ENCODE measurements at regions of chr4 and their contacts with region 1.

Region 1: GRCh38 chr4:10321931-10322330 is 135.3 kb downstream of the ZNF518B start:
- DNase-seq: no peak
- H3K4me3 ChIP-seq: no peak overlapping the region
- H3K4me3 Mint-ChIP-seq: no peak overlapping the region
- H3K27ac Mint-ChIP-seq: peak overlapping the region; percentile 71
- H3K4me1 ChIP-seq: peaks cover 27% of the 10 kb centered on the region
- H3K4me1 Mint-ChIP-seq: peaks cover 16% of the 10 kb centered on the region
- H3K27me3 ChIP-seq: no peaks in the 10 kb centered on the region
- H3K27me3 Mint-ChIP-seq: no peaks in the 10 kb centered on the region
- CTCF ChIP-seq: no peak

Region 2: GRCh38 chr4:10164877-10165283 is 157.1 kb before region 1 on chr4:
- CTCF ChIA-PET with region 1: interaction called, 3 read pairs
- POLR2A ChIA-PET with region 1: no interaction called
- intact Hi-C with region 1: loop called (anchors 1 kb)
- DNase-seq: peak in 1 of 2 experiments; percentile 56
- H3K4me3 ChIP-seq: no peak overlapping the region
- H3K4me3 Mint-ChIP-seq: no peak overlapping the region
- H3K27ac Mint-ChIP-seq: no peak overlapping the region
- H3K4me1 ChIP-seq: peaks cover 18% of the 10 kb centered on the region
- H3K4me1 Mint-ChIP-seq: peaks cover 20% of the 10 kb centered on the region
- H3K27me3 ChIP-seq: no peaks in the 10 kb centered on the region
- H3K27me3 Mint-ChIP-seq: no peaks in the 10 kb centered on the region
- CTCF ChIP-seq: peak; percentile 50 to 63

Region 3: DNA sequence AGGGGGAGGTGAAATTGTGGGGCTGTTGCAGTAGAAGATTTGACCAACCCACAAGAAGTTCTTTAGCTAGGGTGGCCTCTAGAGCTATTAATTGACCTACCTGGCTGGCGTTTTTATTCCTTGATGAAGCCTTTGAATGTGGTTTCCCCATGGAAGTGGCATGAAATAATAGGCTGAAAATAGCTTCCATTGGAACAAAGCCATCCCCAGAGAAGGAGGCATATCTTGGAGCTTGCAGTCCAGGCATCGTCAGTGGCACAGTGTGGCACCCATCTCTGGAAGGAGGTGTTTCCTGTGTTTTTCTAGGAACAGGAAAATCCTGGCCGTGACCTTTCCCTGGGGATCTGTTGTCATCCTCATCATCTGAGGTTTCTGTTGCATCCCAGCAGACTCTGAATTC is 109.0 kb before region 1 on chr4:
- CTCF ChIA-PET with region 1: no interaction called
- POLR2A ChIA-PET with region 1: no interaction called
- intact Hi-C with region 1: loop called (anchors 1 kb)
- DNase-seq: no peak
- H3K4me3 ChIP-seq: no peak overlapping the region
- H3K4me3 Mint-ChIP-seq: peak overlapping the region; percentile 29
- H3K27ac Mint-ChIP-seq: peak overlapping the region; percentile 42
- H3K4me1 ChIP-seq: peaks cover 37% of the 10 kb centered on the region
- H3K4me1 Mint-ChIP-seq: no peaks in the 10 kb centered on the region
- H3K27me3 ChIP-seq: no peaks in the 10 kb centered on the region
- H3K27me3 Mint-ChIP-seq: no peaks in the 10 kb centered on the region
- CTCF ChIP-seq: no peak

Region 4: GRCh38 chr4:10302111-10302510 is 19.8 kb before region 1 on chr4:
- CTCF ChIA-PET with region 1: no interaction called
- POLR2A ChIA-PET with region 1: no interaction called
- intact Hi-C with region 1: loop called (anchors 2 kb)
- DNase-seq: no peak
- H3K4me3 ChIP-seq: no peak overlapping the region
- H3K4me3 Mint-ChIP-seq: no peak overlapping the region
- H3K27ac Mint-ChIP-seq: no peak overlapping the region
- H3K4me1 ChIP-seq: no peaks in the 10 kb centered on the region
- H3K4me1 Mint-ChIP-seq: peaks cover 9% of the 10 kb centered on the region
- H3K27me3 ChIP-seq: no peaks in the 10 kb centered on the region
- H3K27me3 Mint-ChIP-seq: no peaks in the 10 kb centered on the region
- CTCF ChIP-seq: no peak

Region 5: DNA sequence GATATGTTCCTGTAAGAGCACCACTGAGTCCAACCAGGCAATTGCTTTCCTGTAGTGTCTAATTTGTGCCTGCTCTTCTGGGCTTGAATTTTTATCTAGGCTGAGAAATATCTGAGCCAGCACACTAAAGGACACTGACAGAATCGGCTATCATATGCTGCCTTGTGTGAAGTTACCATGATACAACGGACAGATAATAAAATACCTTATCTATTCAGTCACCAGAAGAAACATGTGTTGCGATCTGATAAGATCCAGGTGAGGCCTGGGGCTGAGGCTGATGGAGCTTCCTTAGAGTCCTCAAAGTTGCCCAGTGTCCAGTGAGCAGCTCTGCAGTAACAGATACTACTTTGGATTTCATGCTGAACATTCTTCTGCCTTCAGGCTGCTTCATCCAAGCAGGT is 23.5 kb after region 1 on chr4:
- CTCF ChIA-PET with region 1: no interaction called
- POLR2A ChIA-PET with region 1: no interaction called
- intact Hi-C with region 1: loop called (anchors 1 kb)
- DNase-seq: no peak
- H3K4me3 ChIP-seq: no peak overlapping the region
- H3K4me3 Mint-ChIP-seq: no peak overlapping the region
- H3K27ac Mint-ChIP-seq: peak overlapping the region; percentile 78
- H3K4me1 ChIP-seq: peaks cover 26% of the 10 kb centered on the region
- H3K4me1 Mint-ChIP-seq: peaks cover 21% of the 10 kb centered on the region
- H3K27me3 ChIP-seq: no peaks in the 10 kb centered on the region
- H3K27me3 Mint-ChIP-seq: no peaks in the 10 kb centered on the region
- CTCF ChIP-seq: no peak

Region 6: DNA sequence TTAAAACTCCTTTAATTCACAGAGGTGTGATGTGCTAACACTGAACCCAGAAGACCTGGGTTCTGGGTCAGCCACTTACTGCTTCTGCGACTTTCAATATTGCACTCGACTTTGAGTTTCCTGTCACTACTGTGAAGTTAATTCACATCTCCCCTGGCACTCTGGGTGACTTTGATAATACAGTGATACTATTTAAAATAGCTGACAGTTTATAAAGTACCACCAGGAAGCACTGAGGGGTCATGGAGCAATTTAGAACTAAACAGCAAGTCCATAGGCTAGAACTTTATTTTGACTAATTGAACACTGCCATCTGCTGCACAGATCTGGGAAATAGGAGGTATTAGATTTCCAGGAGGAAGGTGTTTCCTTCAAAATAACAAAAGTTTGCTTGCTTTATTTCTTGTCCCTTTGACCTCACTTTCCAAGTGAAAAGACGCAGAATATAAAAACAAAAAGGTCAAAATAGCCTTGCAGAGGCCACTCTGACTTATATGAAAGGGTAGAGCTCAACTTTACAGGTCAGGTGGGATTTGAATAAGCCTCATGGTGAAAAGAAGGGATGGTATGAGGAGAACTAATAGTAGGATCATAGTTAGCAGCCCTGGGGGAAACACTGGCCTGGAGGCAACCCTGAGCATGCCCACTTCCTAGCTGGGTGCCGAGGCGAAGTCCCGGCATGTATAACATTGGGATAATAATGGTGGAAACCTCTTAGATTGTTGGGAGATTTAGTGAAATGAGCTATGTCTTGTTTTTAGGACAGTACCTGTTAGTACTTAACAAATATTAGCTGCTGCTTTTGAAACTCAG is 81.9 kb after region 1 on chr4:
- CTCF ChIA-PET with region 1: no interaction called
- POLR2A ChIA-PET with region 1: no interaction called
- intact Hi-C with region 1: loop called (anchors 5 kb)
- DNase-seq: peak in 1 of 2 experiments; percentile 52
- H3K4me3 ChIP-seq: no peak overlapping the region
- H3K4me3 Mint-ChIP-seq: no peak overlapping the region
- H3K27ac Mint-ChIP-seq: no peak overlapping the region
- H3K4me1 ChIP-seq: no peaks in the 10 kb centered on the region; the same call in 1 of the 2 replicates
- H3K4me1 Mint-ChIP-seq: no peaks in the 10 kb centered on the region
- H3K27me3 ChIP-seq: no peaks in the 10 kb centered on the region
- H3K27me3 Mint-ChIP-seq: no peaks in the 10 kb centered on the region
- CTCF ChIP-seq: peak; percentile 48 to 50

Measured in Caco-2 (cell line).